ENCODE measurements at regions of chr16 and their contacts with region 1.

Region 1: DNA sequence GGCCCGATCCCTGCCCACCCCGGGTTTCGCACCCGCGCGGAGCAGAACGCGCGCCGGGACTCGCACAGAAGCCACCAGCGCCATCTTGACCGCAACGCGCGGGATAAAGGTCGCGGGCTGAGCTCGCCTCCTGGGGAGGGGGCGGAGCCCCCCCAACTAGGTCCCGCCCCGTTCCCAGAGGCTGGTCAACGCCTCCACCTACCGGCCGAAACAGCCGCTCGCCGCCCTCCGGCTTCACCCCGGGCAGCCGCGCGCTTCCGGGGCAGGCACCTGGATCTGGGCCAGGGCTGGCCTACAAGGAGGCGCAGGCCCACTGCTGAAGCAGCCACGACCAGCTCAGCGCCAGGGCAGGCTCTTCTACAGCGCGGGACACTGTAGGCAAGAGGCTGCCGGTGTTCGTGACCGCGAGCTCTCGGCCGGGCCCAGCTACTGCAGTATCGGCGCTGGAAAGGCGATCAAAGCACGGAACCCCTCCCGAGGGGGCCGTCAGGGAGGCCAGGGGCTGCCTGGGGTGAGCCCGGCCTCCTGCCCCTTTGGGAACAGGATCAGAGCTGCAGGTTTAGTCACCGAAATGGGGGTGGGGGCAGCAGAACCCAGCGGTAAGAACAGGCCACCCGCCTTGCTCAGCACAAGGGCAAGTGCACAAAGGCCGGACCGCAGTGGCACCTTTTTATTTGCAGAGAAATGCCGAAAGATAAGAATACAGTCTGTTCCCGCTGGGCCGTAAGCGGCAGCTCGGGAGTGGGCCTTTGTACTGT is at the start of gene ECI1:
- DNase-seq: peak; percentile 86 to 96 (median 90)
- H3K4me3 ChIP-seq: peak within 1 kb of the TSS; percentile 55 to 90 (median 74)
- H3K27ac ChIP-seq: peak within 1 kb of the TSS; percentile 44 to 97 (median 92)
- H3K27me3 ChIP-seq: no peaks in the 10 kb centered on the region
- CTCF ChIP-seq: peak; percentile 22 to 91 (median 79)
- total RNA-seq, gene ECI1: 24.9 to 65.0 (median 34.8) TPM

Region 2: GRCh38 chr16:2223375-2224182 is 28.1 kb before region 1 on chr16 and contains the start of gene E4F1:
- intact Hi-C with region 1: loop called in 1 of 2 experiments (anchors 2 kb)
- DNase-seq: peak; percentile 96 to 100 (median 99)
- H3K4me3 ChIP-seq: peak within 1 kb of the TSS; percentile 66 to 100 (median 94)
- H3K27ac ChIP-seq: peak within 1 kb of the TSS; percentile 37 to 94 (median 89)
- H3K27me3 ChIP-seq: no peaks in the 10 kb centered on the region
- CTCF ChIP-seq: peak in 21 of 56 donors; percentile 4 to 66 (median 22)
- total RNA-seq, gene E4F1: 22.7 to 49.6 (median 30.9) TPM

Region 3: DNA sequence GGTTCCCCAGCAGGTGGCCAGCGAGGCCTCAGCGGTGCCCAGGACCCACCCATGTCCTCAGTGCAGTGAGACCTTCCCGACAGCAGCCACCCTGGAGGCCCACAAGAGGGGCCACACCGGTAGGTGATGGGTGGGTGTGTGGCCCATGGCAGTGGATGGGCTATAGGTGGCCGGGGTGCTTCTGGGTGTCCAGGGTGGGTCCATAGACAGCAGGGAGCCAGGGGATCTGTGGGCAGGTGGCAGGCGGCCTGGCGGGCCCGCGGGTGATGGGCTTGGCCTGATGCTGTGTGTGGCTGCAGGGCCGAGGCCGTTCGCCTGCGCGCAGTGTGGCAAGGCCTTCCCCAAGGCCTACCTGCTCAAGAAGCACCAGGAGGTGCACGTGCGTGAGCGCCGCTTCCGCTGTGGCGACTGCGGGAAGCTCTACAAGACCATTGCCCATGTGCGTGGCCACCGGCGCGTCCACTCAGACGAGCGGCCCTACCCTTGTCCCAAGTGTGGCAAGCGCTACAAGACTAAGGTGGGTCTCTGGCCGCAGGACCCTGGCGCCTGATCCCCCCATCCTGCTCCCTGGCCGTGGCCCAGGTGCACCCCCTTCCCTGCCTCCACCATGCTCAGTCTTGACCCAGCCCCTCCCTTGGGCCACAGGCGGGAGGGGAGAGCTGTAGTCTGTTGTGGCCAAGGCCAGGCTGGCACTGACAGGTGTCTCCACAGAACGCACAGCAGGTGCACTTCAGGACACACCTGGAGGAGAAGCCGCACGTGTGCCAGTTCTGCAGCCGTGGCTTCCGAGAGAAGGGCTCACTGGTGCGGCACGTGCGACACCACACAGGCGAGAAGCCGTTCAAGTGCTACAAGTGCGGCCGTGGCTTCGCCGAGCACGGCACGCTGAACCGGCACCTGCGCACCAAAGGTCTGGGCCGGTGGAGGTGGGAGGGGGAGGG is 17.5 kb before region 1 on chr16:
- intact Hi-C with region 1: loop called in 1 of 2 experiments (anchors 1 kb)
- DNase-seq: no peak
- H3K4me3 ChIP-seq: no peak overlapping the region
- H3K27ac ChIP-seq: no peak overlapping the region
- H3K27me3 ChIP-seq: no peaks in the 10 kb centered on the region
- CTCF ChIP-seq: no peak

Measured in dorsolateral prefrontal cortex (tissue), 120 donors.